Uterus (tissue), 4 donors: ENCODE measurements at regions of chr12 and their contacts with region 1.

Region 1: GRCh38 chr12:95117178-95117599 is 43.8 kb upstream of the NR2C1 start:
- DNase-seq: peak; percentile 59 to 84
- H3K4me3 ChIP-seq: no peak overlapping the region
- H3K27ac ChIP-seq: peak overlapping the region; percentile 74 to 87
- H3K4me1 ChIP-seq: peaks cover 7 to 9% of the 10 kb centered on the region in 2 donors
- H3K27me3 ChIP-seq: no peaks in the 10 kb centered on the region
- CTCF ChIP-seq: peak; percentile 72 to 90 (median 80)
- POLR2A ChIP-seq: no peak

Region 2: DNA sequence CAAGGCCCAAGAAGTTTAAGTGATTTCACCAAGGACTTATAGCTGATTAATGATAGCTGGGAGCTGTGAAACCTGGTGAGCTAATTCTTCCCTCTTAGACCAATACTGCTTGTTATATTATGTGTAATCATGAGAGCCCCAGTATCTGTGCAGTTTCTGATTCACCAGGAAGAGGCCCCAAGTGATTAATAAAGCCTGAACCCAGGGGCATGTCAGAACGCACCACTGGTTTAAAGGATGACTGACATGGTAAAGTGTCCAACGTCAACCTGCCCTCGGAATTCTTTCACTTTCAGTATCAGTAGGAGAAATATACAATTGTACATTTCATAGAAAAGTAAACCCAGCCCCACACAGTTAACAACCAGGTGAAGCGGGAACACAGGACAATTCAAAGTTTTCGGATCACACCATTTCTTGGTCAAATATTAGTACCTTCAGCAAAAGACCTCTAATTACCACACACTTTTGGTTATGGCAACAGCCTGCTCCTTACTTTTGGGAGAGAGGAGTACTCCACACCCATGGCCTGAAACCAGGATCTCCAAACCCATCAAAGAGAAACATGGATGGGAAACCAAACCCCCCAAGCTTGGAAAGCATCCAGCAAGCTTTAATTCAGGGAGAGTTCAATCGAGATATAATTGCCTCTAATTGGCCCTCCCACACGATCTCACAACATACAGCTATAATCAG is 495.4 kb before region 1 on chr12:
- intact Hi-C with region 1: no loop called
- DNase-seq: no peak
- H3K4me3 ChIP-seq: no peak overlapping the region
- H3K27ac ChIP-seq: peak overlapping the region in 1 of 2 donors; percentile 23
- H3K4me1 ChIP-seq: no peaks in the 10 kb centered on the region
- H3K27me3 ChIP-seq: no peaks in the 10 kb centered on the region
- CTCF ChIP-seq: no peak
- POLR2A ChIP-seq: no peak

Region 3: DNA sequence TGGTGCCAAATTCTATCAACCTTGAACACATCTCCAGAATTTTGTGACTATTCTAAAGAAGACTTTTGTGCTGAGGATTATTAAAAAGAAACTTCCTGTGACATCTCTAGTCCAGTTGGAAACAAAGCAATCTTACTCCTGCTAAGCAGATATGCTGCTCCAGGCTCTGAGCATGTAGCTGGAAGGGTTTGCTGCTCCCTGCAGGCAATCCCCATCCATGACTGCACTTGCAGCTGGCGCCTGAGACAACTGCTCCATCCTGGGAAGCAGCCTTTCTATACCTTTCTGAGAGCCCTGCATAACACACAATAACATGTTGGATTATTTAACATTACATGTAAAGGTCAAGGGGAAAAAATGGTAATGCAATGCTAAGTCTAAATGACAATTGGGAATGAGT is 218.8 kb before region 1 on chr12:
- intact Hi-C with region 1: no loop called
- DNase-seq: no peak
- H3K4me3 ChIP-seq: no peak overlapping the region
- H3K27ac ChIP-seq: no peak overlapping the region
- H3K4me1 ChIP-seq: no peaks in the 10 kb centered on the region
- H3K27me3 ChIP-seq: no peaks in the 10 kb centered on the region
- CTCF ChIP-seq: no peak
- POLR2A ChIP-seq: no peak

Region 4: GRCh38 chr12:95336390-95337067 is 219.3 kb after region 1 on chr12:
- intact Hi-C with region 1: loop called (anchors 5 kb)
- DNase-seq: peak; percentile 70 to 83
- H3K4me3 ChIP-seq: no peak overlapping the region
- H3K27ac ChIP-seq: peak overlapping the region; percentile 67 to 75
- H3K4me1 ChIP-seq: no peaks in the 10 kb centered on the region
- H3K27me3 ChIP-seq: no peaks in the 10 kb centered on the region
- CTCF ChIP-seq: peak; percentile 77 to 93 (median 84)
- POLR2A ChIP-seq: no peak

Region 5: GRCh38 chr12:95532851-95533250 is 415.7 kb after region 1 on chr12:
- intact Hi-C with region 1: loop called (anchors 10 kb)
- DNase-seq: no peak
- H3K4me3 ChIP-seq: no peak overlapping the region
- H3K27ac ChIP-seq: no peak overlapping the region
- H3K4me1 ChIP-seq: no peaks in the 10 kb centered on the region
- H3K27me3 ChIP-seq: no peaks in the 10 kb centered on the region
- CTCF ChIP-seq: no peak
- POLR2A ChIP-seq: no peak